ENCODE measurements at regions of chr19 and their contacts with region 1.

Region 1: GRCh38 chr19:46513461-46514236 is 18.0 kb upstream of the PNMA8B start:
- DNase-seq: peak; percentile 83 to 94 (median 93)
- ATAC-seq: peak; percentile 87 to 91
- H3K4me3 ChIP-seq: no peak overlapping the region
- H3K27ac ChIP-seq: no peak overlapping the region
- H3K4me1 ChIP-seq: no peaks in the 10 kb centered on the region
- H3K27me3 ChIP-seq: no peaks in the 10 kb centered on the region

Region 2: GRCh38 chr19:46271481-46272197 is 242.0 kb before region 1 on chr19:
- intact Hi-C with region 1: loop called in 1 of 4 experiments (anchors 10 kb)
- DNase-seq: no peak
- ATAC-seq: peak in 1 of 2 donors; percentile 50
- H3K4me3 ChIP-seq: no peak overlapping the region
- H3K27ac ChIP-seq: no peak overlapping the region
- H3K4me1 ChIP-seq: no peaks in the 10 kb centered on the region
- H3K27me3 ChIP-seq: no peaks in the 10 kb centered on the region

Region 3: GRCh38 chr19:46288896-46289588 is 224.6 kb before region 1 on chr19:
- intact Hi-C with region 1: loop called in 2 of 4 experiments (anchors 10 kb)
- DNase-seq: peak in 2 of 3 donors; percentile 59 to 70
- ATAC-seq: peak; percentile 72 to 75
- H3K4me3 ChIP-seq: no peak overlapping the region
- H3K27ac ChIP-seq: peak overlapping the region; percentile 88
- H3K4me1 ChIP-seq: peaks cover 3% of the 10 kb centered on the region
- H3K27me3 ChIP-seq: no peaks in the 10 kb centered on the region

Region 4: DNA sequence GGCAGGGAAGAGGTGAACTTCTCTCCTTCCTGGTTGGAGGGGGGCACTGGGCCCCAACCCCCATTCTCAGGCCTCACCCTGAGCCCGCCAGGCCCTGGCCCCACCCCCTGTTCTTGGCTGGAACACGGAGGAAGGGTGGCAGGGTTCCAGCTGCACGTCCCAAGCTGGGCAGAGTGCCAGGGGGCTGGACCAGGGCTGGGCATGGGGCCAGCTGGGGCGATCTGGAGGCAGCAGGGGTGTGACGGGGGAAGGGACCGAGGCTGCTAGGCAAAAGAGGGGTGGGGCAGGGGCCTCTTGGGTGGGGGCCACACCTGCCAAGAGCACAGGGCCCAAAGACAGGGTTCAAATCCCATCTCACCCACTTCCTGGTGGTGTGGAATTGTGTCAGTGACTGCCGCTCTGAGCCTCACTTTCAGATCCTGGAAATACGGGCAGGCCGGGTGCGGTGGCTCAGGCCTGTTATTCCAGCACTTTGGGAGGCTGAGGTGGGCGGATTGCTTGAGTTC is 214.6 kb before region 1 on chr19:
- intact Hi-C with region 1: loop called in 1 of 4 experiments (anchors 10 kb)
- DNase-seq: peak; percentile 97 to 99 (median 99)
- ATAC-seq: peak; percentile 76 to 78
- H3K4me3 ChIP-seq: peak overlapping the region; percentile 69
- H3K27ac ChIP-seq: peak overlapping the region; percentile 96
- H3K4me1 ChIP-seq: peaks cover 10% of the 10 kb centered on the region
- H3K27me3 ChIP-seq: no peaks in the 10 kb centered on the region

Region 5: DNA sequence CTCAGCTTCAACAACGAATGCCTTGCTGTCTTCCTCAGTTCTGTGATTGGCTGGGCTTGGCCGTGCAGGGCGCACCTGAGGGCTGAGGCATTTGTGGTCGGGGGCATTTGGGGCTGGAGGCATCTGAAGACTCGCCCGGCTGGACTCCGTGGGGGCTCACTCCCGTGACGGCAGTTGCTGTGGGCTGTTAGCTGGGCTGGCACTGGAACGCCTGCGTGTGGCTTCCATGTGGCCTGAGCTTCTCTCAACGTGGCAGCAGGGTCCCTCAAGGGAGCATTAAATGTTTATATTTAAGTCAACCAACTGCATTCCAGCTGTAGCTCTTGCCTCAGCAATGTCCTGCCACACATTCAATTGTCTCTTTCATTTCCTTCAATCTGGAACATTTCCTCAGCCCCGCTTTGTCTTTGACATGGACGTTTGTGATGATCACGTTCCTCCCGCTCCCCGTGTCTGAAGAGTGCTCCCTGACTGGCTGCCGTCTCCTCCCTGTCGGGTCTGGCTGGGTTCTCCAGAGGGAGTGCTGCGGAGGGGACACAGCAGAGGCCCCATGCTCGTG is 121.3 kb before region 1 on chr19:
- intact Hi-C with region 1: loop called in 1 of 4 experiments (anchors 10 kb)
- DNase-seq: peak; percentile 13 to 48 (median 36)
- ATAC-seq: no peak
- H3K4me3 ChIP-seq: no peak overlapping the region
- H3K27ac ChIP-seq: no peak overlapping the region
- H3K4me1 ChIP-seq: no peaks in the 10 kb centered on the region
- H3K27me3 ChIP-seq: no peaks in the 10 kb centered on the region

Measured in right cardiac atrium (tissue), 5 donors.